ENCODE measurements at regions of chr6 and their contacts with region 1.

Region 1: GRCh38 chr6:19332797-19333460 is 504.2 kb upstream of the ID4 start:
- DNase-seq: no peak
- H3K4me3 ChIP-seq: no peak overlapping the region
- H3K27ac ChIP-seq: no peak overlapping the region
- H3K4me1 ChIP-seq: no peaks in the 10 kb centered on the region
- CTCF ChIP-seq: no peak

Region 2: GRCh38 chr6:19297880-19298279 is 35.0 kb before region 1 on chr6:
- CTCF ChIA-PET with region 1: no interaction called
- POLR2A ChIA-PET with region 1: interaction called, 13 read pairs
- intact Hi-C with region 1: no loop called
- DNase-seq: no peak
- H3K4me3 ChIP-seq: no peak overlapping the region
- H3K27ac ChIP-seq: no peak overlapping the region
- H3K4me1 ChIP-seq: no peaks in the 10 kb centered on the region
- CTCF ChIP-seq: no peak

Region 3: GRCh38 chr6:19356692-19357091 is 23.8 kb after region 1 on chr6:
- CTCF ChIA-PET with region 1: no interaction called
- POLR2A ChIA-PET with region 1: no interaction called
- intact Hi-C with region 1: no loop called
- DNase-seq: no peak
- H3K4me3 ChIP-seq: no peak overlapping the region
- H3K27ac ChIP-seq: no peak overlapping the region
- H3K4me1 ChIP-seq: no peaks in the 10 kb centered on the region
- CTCF ChIP-seq: no peak

Measured in OCI-LY7 (cell line).